ENCODE measurements at regions of chr5 and their contacts with region 1.

Region 1: GRCh38 chr5:159341914-159342313 is 11.6 kb upstream of the IL12B start:
- DNase-seq: peak; percentile 99
- H3K4me3 Mint-ChIP-seq: peak overlapping the region; percentile 26
- H3K27ac Mint-ChIP-seq: peak overlapping the region; percentile 74
- H3K4me1 Mint-ChIP-seq: peaks cover 50% of the 10 kb centered on the region
- H3K27me3 Mint-ChIP-seq: no peaks in the 10 kb centered on the region
- CTCF ChIP-seq: no peak

Region 2: DNA sequence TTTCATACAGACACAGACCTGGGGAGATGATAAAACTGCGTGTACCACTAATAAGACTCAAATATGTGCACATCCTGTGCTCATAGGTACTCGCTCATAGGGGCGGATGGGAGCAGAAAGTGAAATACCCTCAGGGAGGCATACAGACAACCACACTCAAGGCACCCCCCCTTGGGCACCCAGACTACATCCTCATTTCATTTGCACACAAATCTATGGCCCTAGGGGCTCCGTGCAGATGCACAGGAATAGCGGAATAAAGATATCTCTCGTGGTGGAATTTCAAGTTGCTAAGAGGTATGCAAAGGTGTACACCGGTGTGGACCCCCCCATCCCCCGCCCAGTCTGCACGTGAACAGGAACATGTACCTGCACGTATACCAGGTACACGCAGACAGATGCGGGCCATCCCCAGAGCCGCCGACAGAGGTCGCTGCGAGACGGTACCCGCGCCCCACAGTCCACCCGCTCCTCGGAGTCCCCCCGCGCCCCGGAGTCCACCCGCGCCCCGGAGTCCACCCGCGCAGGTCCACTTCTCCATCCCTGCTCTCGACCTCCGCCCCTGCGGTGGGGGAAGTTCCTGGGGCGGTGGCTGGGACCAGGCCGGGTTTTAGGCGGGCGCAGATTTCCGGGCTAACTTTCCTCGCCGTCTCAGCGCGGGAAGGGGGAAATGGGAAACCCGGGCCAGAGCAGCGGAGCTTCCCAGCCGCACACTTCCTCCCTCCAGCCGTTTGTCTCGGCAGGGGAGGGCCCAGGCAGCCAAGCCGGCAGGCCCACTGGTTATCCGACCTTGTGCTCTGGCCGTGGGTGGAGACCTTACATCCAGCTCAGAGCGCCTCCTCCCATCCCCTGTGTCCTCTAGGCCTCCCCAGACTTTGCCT is 10.6 kb before region 1 on chr5:
- CTCF ChIA-PET with region 1: interaction called, 12 read pairs
- POLR2A ChIA-PET with region 1: interaction called, 11 read pairs
- intact Hi-C with region 1: no loop called
- DNase-seq: peak; percentile 49
- H3K4me3 Mint-ChIP-seq: peak overlapping the region; percentile 73
- H3K27ac Mint-ChIP-seq: peak overlapping the region; percentile 80
- H3K4me1 Mint-ChIP-seq: peaks cover 30% of the 10 kb centered on the region
- H3K27me3 Mint-ChIP-seq: no peaks in the 10 kb centered on the region
- CTCF ChIP-seq: peak; percentile 80

Region 3: DNA sequence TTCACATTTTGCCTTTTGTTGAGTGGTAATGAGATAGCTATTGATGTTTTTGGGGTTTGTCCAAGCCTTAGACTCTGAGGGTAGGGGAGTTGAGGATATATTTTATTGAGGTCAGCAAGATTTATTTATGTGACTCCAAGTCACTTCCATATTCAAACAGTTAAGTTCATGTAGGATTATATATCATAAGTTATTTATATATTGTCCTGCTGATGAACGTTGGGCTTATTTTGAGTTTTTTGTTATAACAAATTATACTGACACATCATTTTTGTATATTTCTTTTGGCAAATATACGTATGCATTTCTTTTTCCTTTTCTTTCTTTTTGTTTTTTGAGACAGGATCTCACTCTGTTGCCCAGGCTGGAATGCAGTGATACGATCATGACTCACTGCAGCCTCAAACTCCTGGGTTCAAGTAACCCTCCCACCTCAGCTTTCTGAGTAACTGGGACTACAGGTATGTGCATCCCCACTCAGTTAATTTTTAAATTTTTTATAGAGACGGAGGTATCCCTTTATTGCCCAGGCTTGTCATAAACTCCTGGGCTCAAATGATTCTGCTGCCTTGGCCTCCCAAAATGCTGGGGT is 11.8 kb after region 1 on chr5:
- CTCF ChIA-PET with region 1: interaction called, 3 read pairs
- POLR2A ChIA-PET with region 1: interaction called, 11 read pairs
- intact Hi-C with region 1: no loop called
- DNase-seq: no peak
- H3K4me3 Mint-ChIP-seq: no peak overlapping the region
- H3K27ac Mint-ChIP-seq: peak overlapping the region; percentile 72
- H3K4me1 Mint-ChIP-seq: peaks cover 9% of the 10 kb centered on the region
- H3K27me3 Mint-ChIP-seq: no peaks in the 10 kb centered on the region
- CTCF ChIP-seq: no peak

Measured in MCF 10A (cell line).